K562 (cell line): ENCODE measurements at regions of chr11 and their contacts with region 1.

Region 1: GRCh38 chr11:46006418-46007070 is 84.1 kb downstream of the LARGE2 start:
- DNase-seq: peak; percentile 45 to 87 (median 58)
- ATAC-seq: peak; percentile 85
- H3K4me3 ChIP-seq: no peak overlapping the region
- H3K27ac ChIP-seq: no peak overlapping the region
- H3K4me1 ChIP-seq: peaks cover 0 to 15% of the 10 kb centered on the region in 2 experiments; a peak in 2 of 5 replicates
- H3K27me3 ChIP-seq: no peaks in the 10 kb centered on the region
- CTCF ChIP-seq: peak; percentile 76 to 94 (median 80)
- EP300 ChIP-seq: no peak
- POLR2A ChIP-seq: no peak
- RAD21 ChIP-seq: peak; percentile 90 to 99

Region 2: DNA sequence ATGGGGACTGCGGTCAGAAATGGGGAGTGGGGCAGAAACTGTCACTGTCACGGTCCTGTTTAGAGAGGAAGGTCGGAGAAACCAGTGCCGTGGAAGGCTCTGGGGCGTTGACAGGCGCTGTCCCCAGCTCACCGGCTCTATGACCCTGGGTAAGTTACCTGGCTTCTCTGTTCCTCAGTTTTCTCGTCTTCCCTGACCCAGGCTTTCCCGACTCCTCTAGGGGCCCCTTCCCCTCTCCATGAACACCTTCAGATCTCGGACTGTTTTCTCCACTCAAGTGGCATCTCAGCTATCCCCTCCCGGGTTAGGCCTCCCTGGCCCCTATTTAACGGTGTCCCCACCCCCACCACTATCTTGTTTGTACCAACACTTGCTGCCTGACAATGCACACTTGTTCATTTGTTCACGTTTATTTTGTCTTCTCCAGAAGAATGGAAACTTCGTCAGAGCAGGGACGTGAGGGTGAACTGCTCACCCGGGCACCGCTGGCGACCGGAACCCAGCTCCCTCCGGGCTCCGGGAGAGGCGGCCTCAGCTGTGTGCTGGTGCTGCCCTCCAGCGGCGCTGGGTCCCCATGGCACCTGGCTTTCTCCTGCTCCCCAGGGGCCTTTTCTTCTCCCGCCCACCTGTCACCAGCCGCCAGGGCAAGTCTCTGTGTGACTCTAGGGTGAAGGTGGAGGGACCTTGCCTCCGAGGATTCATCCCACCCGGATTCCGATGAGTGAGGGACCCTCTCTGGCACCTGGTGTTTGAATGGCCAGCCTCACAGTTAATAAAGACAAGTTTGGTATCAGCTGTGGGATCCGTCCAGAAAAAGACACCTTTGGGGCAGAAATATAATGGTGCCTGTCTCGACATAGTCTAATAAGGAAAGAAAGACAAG is 234.7 kb before region 1 on chr11:
- CTCF ChIA-PET with region 1: no interaction called
- POLR2A ChIA-PET with region 1: no interaction called
- in situ Hi-C with region 1: no loop called
- intact Hi-C with region 1: loop called (anchors 5 kb)
- DNase-seq: peak; percentile 84 to 95 (median 94)
- ATAC-seq: peak; percentile 97
- H3K4me3 ChIP-seq: peak overlapping the region; percentile 22
- H3K27ac ChIP-seq: no peak overlapping the region
- H3K4me1 ChIP-seq: peaks cover 5 to 12% of the 10 kb centered on the region in 2 experiments; a peak in 3 of 5 replicates
- H3K27me3 ChIP-seq: peaks cover 14 to 56% of the 10 kb centered on the region in 2 experiments
- CTCF ChIP-seq: peak; percentile 92 to 93 (median 92)
- EP300 ChIP-seq: no peak
- POLR2A ChIP-seq: no peak
- RAD21 ChIP-seq: peak; percentile 88 to 90

Region 3: GRCh38 chr11:45786272-45786671 is 220.3 kb before region 1 on chr11:
- CTCF ChIA-PET with region 1: no interaction called
- POLR2A ChIA-PET with region 1: no interaction called
- in situ Hi-C with region 1: no loop called
- intact Hi-C with region 1: no loop called
- DNase-seq: no peak
- ATAC-seq: no peak
- H3K4me3 ChIP-seq: no peak overlapping the region
- H3K27ac ChIP-seq: no peak overlapping the region
- H3K4me1 ChIP-seq: no peaks in the 10 kb centered on the region
- H3K27me3 ChIP-seq: peaks cover 2 to 7% of the 10 kb centered on the region in 2 experiments; a peak in 3 of 5 replicates
- CTCF ChIP-seq: no peak
- EP300 ChIP-seq: no peak
- POLR2A ChIP-seq: no peak
- RAD21 ChIP-seq: no peak

Region 4: DNA sequence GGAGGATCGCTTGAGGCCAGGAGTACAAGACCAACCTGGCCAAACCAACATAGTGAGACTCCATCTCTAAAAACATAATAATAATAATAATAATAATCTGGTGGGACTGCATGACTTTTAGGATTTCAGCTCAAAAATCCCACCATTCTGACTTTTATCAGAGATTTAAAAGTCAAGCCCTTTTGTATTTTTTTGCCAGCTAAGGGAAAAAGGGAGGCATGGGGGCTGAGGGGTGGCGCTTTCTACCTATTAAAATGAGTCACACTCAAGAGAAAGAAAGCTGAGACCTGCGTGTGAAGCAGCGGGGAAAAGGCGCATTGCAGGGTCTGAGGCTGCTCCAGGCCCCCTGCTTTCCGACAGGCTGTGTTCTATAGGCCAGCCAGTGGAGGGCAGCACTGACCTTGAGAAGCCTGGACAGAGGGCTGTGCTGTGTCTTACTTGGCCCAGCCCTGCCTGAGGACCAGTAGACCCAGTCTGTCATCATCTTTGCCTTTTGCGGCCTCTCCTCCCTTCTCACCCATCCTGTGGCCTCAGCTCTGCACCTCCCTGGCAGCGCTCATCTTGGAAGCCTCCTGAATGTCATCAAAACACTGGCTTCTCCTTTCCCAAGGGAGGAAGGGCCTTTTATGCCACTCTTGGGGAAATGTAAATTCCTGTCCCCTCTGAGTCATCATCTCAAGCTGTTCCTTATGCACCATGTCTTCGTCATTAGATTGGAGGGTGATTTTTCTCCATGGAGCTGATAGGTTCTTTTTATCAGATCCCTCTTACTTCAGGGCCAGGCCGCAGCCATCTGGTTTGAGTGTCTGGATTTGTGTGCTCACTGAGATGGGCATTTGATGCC is 133.8 kb before region 1 on chr11:
- CTCF ChIA-PET with region 1: interaction called, 6 read pairs
- POLR2A ChIA-PET with region 1: interaction called, 3 read pairs
- in situ Hi-C with region 1: no loop called
- intact Hi-C with region 1: loop called (anchors 1 kb)
- DNase-seq: peak; percentile 76 to 81 (median 77)
- ATAC-seq: peak; percentile 100
- H3K4me3 ChIP-seq: no peak overlapping the region
- H3K27ac ChIP-seq: no peak overlapping the region
- H3K4me1 ChIP-seq: peaks cover 0 to 8% of the 10 kb centered on the region in 2 experiments; a peak in 3 of 5 replicates
- H3K27me3 ChIP-seq: no peaks in the 10 kb centered on the region
- CTCF ChIP-seq: peak; percentile 83 to 89 (median 86)
- EP300 ChIP-seq: no peak
- POLR2A ChIP-seq: no peak
- RAD21 ChIP-seq: peak; percentile 74 to 93

Region 5: GRCh38 chr11:45930031-45930794 is 76.3 kb before region 1 on chr11:
- CTCF ChIA-PET with region 1: no interaction called
- POLR2A ChIA-PET with region 1: no interaction called
- in situ Hi-C with region 1: no loop called
- intact Hi-C with region 1: no loop called
- DNase-seq: peak in 1 of 4 experiments; percentile 24
- ATAC-seq: peak; percentile 67
- H3K4me3 ChIP-seq: no peak overlapping the region
- H3K27ac ChIP-seq: no peak overlapping the region
- H3K4me1 ChIP-seq: peaks cover 5 to 44% of the 10 kb centered on the region in 2 experiments; a peak in 3 of 5 replicates
- H3K27me3 ChIP-seq: no peaks in the 10 kb centered on the region
- CTCF ChIP-seq: no peak
- EP300 ChIP-seq: no peak
- POLR2A ChIP-seq: no peak
- RAD21 ChIP-seq: no peak

Region 6: GRCh38 chr11:45964911-45965389 is 41.6 kb before region 1 on chr11:
- CTCF ChIA-PET with region 1: interaction called, 36 read pairs
- POLR2A ChIA-PET with region 1: interaction called, 4 read pairs
- in situ Hi-C with region 1: loop called (anchors 5 kb)
- intact Hi-C with region 1: loop called (anchors 1 kb)
- DNase-seq: peak; percentile 76 to 87 (median 80)
- ATAC-seq: peak; percentile 98
- H3K4me3 ChIP-seq: no peak overlapping the region
- H3K27ac ChIP-seq: no peak overlapping the region; the same call in 2 of the 3 replicates
- H3K4me1 ChIP-seq: peaks cover 3 to 6% of the 10 kb centered on the region in 2 experiments; a peak in 3 of 5 replicates
- H3K27me3 ChIP-seq: no peaks in the 10 kb centered on the region
- CTCF ChIP-seq: peak; percentile 91 to 95 (median 92)
- EP300 ChIP-seq: no peak
- POLR2A ChIP-seq: no peak
- RAD21 ChIP-seq: peak; percentile 90 to 97

Region 7: DNA sequence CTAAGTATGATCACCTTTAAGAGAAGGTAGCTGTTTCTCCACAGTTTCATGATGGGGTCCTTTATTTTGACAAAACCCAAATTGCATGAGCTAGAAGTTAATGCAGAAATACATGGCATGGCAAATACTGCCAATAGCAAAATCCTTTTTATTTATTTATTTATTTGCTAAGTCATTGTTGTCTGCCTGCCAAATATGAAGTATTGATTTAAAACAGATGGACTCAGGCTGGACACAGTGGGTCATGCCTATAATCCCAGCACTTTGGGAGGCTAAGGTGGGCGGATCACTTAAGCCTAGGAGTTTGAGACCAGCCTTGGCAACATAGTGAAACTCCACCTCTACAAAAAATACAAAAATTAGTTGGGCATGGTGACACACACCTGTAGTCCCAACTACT is 31.7 kb before region 1 on chr11:
- CTCF ChIA-PET with region 1: interaction called, 3 read pairs
- POLR2A ChIA-PET with region 1: no interaction called
- in situ Hi-C with region 1: loop called (anchors 5 kb)
- intact Hi-C with region 1: no loop called
- DNase-seq: no peak
- ATAC-seq: no peak
- H3K4me3 ChIP-seq: no peak overlapping the region
- H3K27ac ChIP-seq: no peak overlapping the region
- H3K4me1 ChIP-seq: no peaks in the 10 kb centered on the region; a peak in 1 of 5 replicates
- H3K27me3 ChIP-seq: no peaks in the 10 kb centered on the region
- CTCF ChIP-seq: no peak
- EP300 ChIP-seq: no peak
- POLR2A ChIP-seq: no peak
- RAD21 ChIP-seq: no peak

Region 8: DNA sequence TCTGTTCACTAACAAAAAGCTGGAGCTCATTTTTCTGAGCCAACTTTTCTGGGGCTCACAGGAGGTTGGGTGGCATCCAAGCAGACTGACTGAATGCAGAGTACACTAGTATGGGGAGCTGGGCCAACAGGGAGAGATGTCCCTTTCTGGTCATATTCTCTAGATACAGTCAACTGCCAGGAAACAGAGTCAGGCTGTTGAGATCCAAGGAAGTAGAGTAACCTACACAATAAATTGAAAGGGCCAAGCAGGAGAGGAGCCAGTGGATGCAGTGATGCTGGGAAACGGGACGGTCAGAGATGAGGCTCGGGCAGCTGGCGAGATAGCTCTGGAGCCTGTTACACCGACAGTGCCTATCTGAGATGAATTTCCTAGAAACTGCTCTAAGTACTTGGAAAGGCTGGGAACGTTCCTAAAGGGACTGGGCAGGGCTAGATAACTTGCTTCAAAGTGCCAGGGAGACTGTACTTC is 13.0 kb before region 1 on chr11:
- CTCF ChIA-PET with region 1: no interaction called
- POLR2A ChIA-PET with region 1: interaction called, 22 read pairs
- in situ Hi-C with region 1: no loop called
- intact Hi-C with region 1: no loop called
- DNase-seq: peak; percentile 45 to 86 (median 52)
- ATAC-seq: peak; percentile 46
- H3K4me3 ChIP-seq: peak overlapping the region; percentile 7; the same call in 1 of the 2 replicates
- H3K27ac ChIP-seq: peak overlapping the region; percentile 98
- H3K4me1 ChIP-seq: peaks cover 24 to 72% of the 10 kb centered on the region in 2 experiments
- H3K27me3 ChIP-seq: no peaks in the 10 kb centered on the region
- CTCF ChIP-seq: no peak
- EP300 ChIP-seq: peak; percentile 77
- POLR2A ChIP-seq: no peak
- RAD21 ChIP-seq: no peak

Region 9: GRCh38 chr11:46055371-46055770 is 48.8 kb after region 1 on chr11:
- CTCF ChIA-PET with region 1: no interaction called
- POLR2A ChIA-PET with region 1: no interaction called
- in situ Hi-C with region 1: no loop called
- intact Hi-C with region 1: no loop called
- DNase-seq: no peak
- ATAC-seq: no peak
- H3K4me3 ChIP-seq: no peak overlapping the region
- H3K27ac ChIP-seq: no peak overlapping the region
- H3K4me1 ChIP-seq: peaks cover 0 to 8% of the 10 kb centered on the region in 2 experiments; a peak in 2 of 5 replicates
- H3K27me3 ChIP-seq: no peaks in the 10 kb centered on the region
- CTCF ChIP-seq: no peak
- EP300 ChIP-seq: no peak
- POLR2A ChIP-seq: no peak
- RAD21 ChIP-seq: no peak

Region 10: DNA sequence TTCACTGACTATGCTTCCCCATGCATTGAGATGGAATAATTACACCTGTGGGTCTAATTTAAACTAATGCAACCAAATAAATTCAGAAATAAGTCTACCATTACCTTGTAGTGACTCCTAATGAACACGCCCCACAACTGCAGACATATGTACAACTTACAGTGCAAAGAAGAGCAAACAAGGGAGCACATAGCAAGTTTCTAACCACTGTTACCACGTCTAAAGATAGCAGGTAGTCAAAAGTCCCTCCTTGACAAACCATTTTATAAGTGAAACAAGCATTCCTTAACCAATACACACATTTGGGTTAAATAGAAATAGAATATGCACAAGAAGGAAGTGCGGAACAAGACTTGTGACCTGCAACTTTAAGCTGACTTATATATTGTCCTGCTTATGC is 94.1 kb after region 1 on chr11:
- CTCF ChIA-PET with region 1: no interaction called
- POLR2A ChIA-PET with region 1: no interaction called
- in situ Hi-C with region 1: no loop called
- intact Hi-C with region 1: no loop called
- DNase-seq: no peak
- ATAC-seq: peak; percentile 11; the same call in 2 of the 3 replicates
- H3K4me3 ChIP-seq: no peak overlapping the region
- H3K27ac ChIP-seq: no peak overlapping the region
- H3K4me1 ChIP-seq: peaks cover 9 to 37% of the 10 kb centered on the region in 2 experiments; a peak in 4 of 5 replicates
- H3K27me3 ChIP-seq: no peaks in the 10 kb centered on the region
- CTCF ChIP-seq: no peak
- EP300 ChIP-seq: no peak
- POLR2A ChIP-seq: no peak
- RAD21 ChIP-seq: no peak

Region 11: GRCh38 chr11:46121724-46122477 is 115.4 kb after region 1 on chr11:
- CTCF ChIA-PET with region 1: no interaction called
- POLR2A ChIA-PET with region 1: no interaction called
- in situ Hi-C with region 1: no loop called
- intact Hi-C with region 1: loop called (anchors 5 kb)
- DNase-seq: peak; percentile 60 to 85 (median 62)
- ATAC-seq: peak; percentile 4
- H3K4me3 ChIP-seq: peak overlapping the region; percentile 79
- H3K27ac ChIP-seq: peak overlapping the region; percentile 70; the same call in 2 of the 3 replicates
- H3K4me1 ChIP-seq: peaks cover 10 to 15% of the 10 kb centered on the region in 2 experiments; a peak in 4 of 5 replicates
- H3K27me3 ChIP-seq: no peaks in the 10 kb centered on the region
- CTCF ChIP-seq: no peak
- EP300 ChIP-seq: no peak
- POLR2A ChIP-seq: no peak
- RAD21 ChIP-seq: no peak